Mammary epithelial cell (primary cell): ENCODE measurements at regions of chr9 and their contacts with region 1.

Region 1: DNA sequence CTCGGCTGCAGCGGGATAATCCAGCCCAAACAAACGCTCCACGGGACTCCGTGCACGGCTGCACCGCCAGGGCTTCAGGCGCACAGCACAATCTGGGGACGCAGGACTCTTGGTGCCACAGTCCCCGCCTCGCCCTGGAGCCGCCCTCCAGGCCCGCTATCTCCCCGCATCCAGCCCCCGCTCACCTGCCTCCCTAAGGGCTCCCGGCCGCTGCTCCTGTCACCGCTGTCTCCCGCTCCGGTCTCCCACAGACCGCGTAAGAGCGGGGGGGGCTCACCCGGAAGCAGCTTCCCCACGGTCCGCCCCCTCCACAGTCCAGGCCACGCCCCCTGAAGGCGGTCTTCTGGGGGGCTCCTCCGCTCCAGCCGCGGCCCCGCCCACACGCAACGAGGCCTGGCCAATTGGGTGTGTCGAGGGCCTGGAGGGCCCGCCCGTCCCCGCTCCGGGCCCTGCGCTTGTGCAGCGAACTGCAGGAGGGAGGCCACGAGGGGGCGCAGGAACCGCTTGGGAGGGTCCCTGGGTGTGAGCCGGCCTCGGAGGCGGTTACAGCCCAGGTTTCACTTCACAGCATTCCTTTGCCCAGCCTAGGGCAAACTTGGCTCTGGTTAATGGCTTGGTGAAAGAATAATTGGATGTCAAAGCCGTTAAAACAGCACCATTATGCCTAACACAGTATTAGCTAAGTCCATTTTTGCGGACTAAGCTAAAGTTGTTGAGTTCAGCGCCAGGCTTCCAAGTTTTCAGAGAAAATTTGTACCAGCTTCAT is at the start of gene ALAD:
- DNase-seq: peak; percentile 98
- H3K4me3 ChIP-seq: peak within 1 kb of the TSS; percentile 87 to 95 (median 87)
- H3K27ac ChIP-seq: peak within 1 kb of the TSS; percentile 53
- H3K4me1 ChIP-seq: peaks cover 8% of the 10 kb centered on the region
- H3K27me3 ChIP-seq: no peaks in the 10 kb centered on the region
- CTCF ChIP-seq: peak; percentile 87 to 97
- total RNA-seq, gene ALAD: 10.2 to 14.5 TPM

Region 2: GRCh38 chr9:112921549-112921948 is 479.7 kb before region 1 on chr9:
- CTCF ChIA-PET with region 1: no interaction called
- dilution Hi-C with region 1: no loop called
- in situ Hi-C with region 1: loop called in 1 of 2 experiments (anchors 25 kb)
- intact Hi-C with region 1: loop called (anchors 10 kb)
- DNase-seq: peak; percentile 52
- H3K4me3 ChIP-seq: no peak overlapping the region
- H3K27ac ChIP-seq: no peak overlapping the region
- H3K4me1 ChIP-seq: peaks cover 12% of the 10 kb centered on the region
- H3K27me3 ChIP-seq: no peaks in the 10 kb centered on the region
- CTCF ChIP-seq: peak; percentile 64 to 84

Region 3: GRCh38 chr9:113150670-113151611 is 250.3 kb before region 1 on chr9 and contains the start of gene SLC31A2:
- CTCF ChIA-PET with region 1: no interaction called
- dilution Hi-C with region 1: no loop called
- in situ Hi-C with region 1: no loop called
- intact Hi-C with region 1: loop called (anchors 1 kb)
- DNase-seq: peak; percentile 84
- H3K4me3 ChIP-seq: peak within 1 kb of the TSS; percentile 82 to 93 (median 92)
- H3K27ac ChIP-seq: peak within 1 kb of the TSS; percentile 89
- H3K4me1 ChIP-seq: peaks cover 44% of the 10 kb centered on the region
- H3K27me3 ChIP-seq: no peaks in the 10 kb centered on the region
- CTCF ChIP-seq: peak in 1 of 2 donors; percentile 51
- total RNA-seq, gene SLC31A2: 68.5 to 80.7 TPM

Region 4: GRCh38 chr9:113340017-113340699 is 61.1 kb before region 1 on chr9 and contains the start of gene WDR31:
- CTCF ChIA-PET with region 1: no interaction called
- dilution Hi-C with region 1: no loop called
- in situ Hi-C with region 1: no loop called
- intact Hi-C with region 1: loop called (anchors 5 kb)
- DNase-seq: peak; percentile 86
- H3K4me3 ChIP-seq: peak within 1 kb of the TSS; percentile 93 to 99 (median 97)
- H3K27ac ChIP-seq: peak within 1 kb of the TSS; percentile 63
- H3K4me1 ChIP-seq: peaks cover 19% of the 10 kb centered on the region
- H3K27me3 ChIP-seq: no peaks in the 10 kb centered on the region
- CTCF ChIP-seq: no peak
- total RNA-seq, gene WDR31: 2.0 to 2.3 TPM

Region 5: DNA sequence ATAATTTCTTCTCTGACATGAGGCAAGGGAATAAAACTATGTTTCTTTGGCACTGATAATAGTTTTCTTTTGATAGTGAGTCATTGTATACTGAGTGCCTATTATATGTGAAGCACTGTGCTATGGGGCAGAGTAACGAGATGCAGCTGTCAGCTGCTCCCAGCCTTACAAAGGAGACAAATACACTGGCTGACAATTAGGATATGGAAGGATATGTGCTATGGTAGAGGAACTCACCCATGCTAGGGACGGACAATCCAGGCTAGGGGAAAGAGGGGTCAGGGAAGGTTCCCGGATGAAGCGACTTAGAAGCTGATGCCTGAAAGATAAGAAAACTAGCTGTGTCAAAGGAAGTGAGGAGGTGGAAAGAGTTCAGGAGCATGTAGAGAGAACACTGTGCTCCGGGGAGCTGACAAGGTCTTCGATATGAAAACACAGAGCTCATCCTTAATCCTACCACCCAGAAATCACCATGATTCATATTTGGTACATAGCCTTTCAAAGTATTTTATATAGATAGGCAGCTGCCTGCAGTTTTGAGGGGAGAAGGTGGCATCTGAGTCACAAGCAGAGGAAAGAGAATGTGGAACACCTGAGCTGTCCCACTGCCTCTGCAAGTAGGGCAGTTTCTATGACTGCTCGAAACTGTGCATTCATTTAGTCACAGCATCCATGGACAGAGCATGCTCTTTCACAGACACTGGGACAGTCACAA is 39.7 kb before region 1 on chr9:
- CTCF ChIA-PET with region 1: no interaction called
- dilution Hi-C with region 1: no loop called
- in situ Hi-C with region 1: no loop called
- intact Hi-C with region 1: no loop called
- DNase-seq: no peak
- H3K4me3 ChIP-seq: no peak overlapping the region
- H3K27ac ChIP-seq: no peak overlapping the region
- H3K4me1 ChIP-seq: no peaks in the 10 kb centered on the region
- H3K27me3 ChIP-seq: no peaks in the 10 kb centered on the region
- CTCF ChIP-seq: no peak

Region 6: DNA sequence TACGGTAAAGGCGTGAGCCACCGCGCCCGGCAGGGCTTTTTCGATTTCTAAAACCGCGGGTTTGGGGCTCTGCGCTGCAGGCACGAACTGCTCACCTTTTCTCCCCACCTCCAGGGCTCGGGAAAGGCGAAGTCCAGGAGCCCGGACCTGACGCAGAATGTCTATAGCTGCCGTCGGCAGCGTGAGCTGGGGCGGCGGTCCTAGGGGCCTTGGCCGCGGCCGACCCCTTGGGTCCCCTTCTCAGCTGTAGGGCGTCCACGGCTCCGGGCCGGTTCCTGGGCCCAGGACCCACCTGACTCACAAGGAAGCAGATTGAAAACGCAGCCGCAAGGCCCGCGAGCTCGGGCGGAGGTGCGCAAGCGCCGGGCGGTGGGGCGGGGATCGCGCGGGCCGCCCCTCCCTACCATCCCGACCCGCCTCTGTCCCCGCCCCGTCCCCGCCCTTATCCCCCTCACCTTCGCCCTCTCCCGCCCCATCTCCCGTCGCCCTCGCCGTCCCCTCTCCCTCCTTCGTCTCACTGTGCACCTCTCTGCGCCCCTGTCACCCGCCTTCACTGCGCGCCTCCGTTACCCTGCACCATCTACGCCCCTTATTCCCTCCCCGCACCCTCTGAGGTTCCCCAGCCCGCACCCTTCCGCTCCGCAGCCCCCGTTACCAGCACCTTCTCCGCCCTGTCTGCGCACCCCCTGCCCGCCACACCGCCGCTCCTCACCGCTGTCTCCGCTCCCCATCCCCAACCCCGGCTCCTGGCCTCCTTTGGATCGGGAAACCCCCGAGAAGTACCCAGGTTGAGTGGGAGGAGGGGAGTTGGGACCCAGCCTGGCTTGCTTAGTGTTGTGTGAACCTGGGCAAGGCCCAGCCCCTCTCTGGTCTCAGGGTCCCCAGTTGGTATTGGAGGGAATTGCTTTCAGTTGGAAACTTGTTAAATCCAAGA is 24.3 kb before region 1 on chr9 and contains the start of gene HDHD3:
- CTCF ChIA-PET with region 1: no interaction called
- dilution Hi-C with region 1: no loop called
- in situ Hi-C with region 1: no loop called
- intact Hi-C with region 1: loop called (anchors 2 kb)
- DNase-seq: peak; percentile 76
- H3K4me3 ChIP-seq: peak within 1 kb of the TSS; percentile 86 to 92 (median 92)
- H3K27ac ChIP-seq: peak within 1 kb of the TSS; percentile 59
- H3K4me1 ChIP-seq: peaks cover 5% of the 10 kb centered on the region
- H3K27me3 ChIP-seq: no peaks in the 10 kb centered on the region
- CTCF ChIP-seq: no peak
- total RNA-seq, gene HDHD3: 12.3 to 14.6 TPM